Transverse colon (tissue), 4 donors: ENCODE measurements at regions of chr11 and their contacts with region 1.

Region 1: DNA sequence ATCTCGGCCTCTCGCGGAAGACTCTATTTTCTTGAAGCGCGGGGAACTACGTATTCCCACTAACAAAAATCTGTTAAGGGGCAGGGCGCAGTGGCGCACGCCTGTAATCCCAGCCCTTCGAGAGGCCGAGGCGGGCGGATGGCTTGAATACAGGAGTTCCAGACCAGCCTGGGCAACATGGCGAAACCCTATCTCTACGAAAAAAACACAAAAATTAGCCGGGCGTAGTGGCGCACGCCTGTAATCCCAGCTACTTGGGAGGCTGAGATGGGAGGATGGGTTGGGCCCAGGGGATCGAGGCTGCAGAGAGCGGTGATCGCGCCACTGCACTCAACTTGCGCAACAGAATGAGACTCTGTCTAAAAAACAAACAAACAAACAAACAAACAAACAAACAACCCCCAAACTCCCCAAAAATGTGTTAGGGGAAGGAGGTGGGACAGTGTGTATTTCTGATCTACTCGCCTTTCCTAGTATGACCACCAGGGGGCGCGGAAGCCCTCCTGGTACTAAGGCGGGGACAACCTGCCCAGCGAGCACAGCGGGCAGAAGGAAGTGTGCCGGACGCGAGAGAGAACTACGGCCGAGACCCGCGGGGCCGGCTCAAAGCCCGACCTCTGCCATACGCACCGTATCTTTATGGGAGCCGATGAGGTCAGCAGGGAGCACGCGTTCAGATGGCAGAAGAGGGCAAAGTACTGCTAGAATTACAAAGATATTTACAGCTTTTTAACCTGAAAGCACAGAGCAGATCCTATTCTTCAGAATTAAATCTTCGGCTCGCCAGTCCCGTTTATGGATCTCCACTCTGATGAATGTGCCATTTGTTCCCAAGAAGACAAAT is 1.3 kb upstream of the STX3 start:
- DNase-seq: peak; percentile 91
- H3K4me3 ChIP-seq: peak overlapping the region; percentile 80 to 96 (median 93)
- H3K27ac ChIP-seq: peak overlapping the region; percentile 94 to 98 (median 96)
- H3K4me1 ChIP-seq: peaks cover 3 to 22% (median 16%) of the 10 kb centered on the region in 4 donors
- H3K27me3 ChIP-seq: no peaks in the 10 kb centered on the region
- CTCF ChIP-seq: peak; percentile 91 to 97 (median 95)
- EP300 ChIP-seq: no peak
- POLR2A ChIP-seq: no peak

Region 2: DNA sequence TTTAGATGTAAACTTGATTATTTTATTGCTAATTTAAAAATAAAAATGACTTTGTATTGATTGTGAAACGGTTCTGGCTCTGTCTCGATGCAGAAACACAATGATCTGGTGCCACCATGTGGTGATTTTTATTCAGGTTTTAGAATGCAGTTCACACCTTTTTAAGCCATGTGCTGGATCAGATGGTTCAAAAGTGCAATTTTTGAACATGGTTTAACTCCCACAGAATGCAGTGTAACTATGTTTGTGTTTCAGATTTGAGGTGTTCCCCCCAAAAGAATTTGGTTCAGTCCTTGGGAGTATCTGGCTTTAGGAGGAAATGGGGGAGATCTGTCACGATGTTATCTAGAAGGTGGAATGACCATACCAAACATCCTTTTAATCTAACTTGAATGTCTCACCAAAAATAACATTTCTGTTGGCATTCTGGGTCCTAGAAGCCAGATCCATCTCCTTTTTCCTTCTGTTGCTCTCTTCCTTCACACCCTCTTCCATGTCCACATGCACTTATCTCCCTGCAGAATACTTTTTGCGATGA is 48.8 kb after region 1 on chr11:
- in situ Hi-C with region 1: loop called (anchors 5 to 10 kb)
- intact Hi-C with region 1: loop called (anchors 5 kb)
- DNase-seq: no peak
- H3K4me3 ChIP-seq: no peak overlapping the region
- H3K27ac ChIP-seq: no peak overlapping the region
- H3K4me1 ChIP-seq: peaks cover 4 to 35% (median 12%) of the 10 kb centered on the region in 4 donors
- H3K27me3 ChIP-seq: no peaks in the 10 kb centered on the region
- CTCF ChIP-seq: peak; percentile 55 to 81 (median 66)
- EP300 ChIP-seq: no peak
- POLR2A ChIP-seq: no peak

Region 3: DNA sequence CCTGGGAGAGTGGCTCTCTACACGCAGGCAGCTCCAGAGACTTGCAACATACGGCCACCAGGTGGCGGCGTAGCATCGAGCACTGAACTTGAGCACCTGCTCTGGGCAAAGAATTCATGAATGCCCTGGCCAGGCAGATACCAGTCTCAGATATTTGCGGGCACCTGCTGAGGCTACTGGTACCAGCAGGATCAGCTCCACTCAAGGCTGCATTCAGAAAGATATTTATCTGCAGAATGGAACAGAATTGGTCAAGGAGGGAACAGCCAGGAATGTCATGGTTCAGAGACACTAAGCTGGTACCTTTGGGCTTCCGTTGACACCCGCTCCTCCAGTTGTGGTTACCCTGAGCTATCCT is 1077.2 kb after region 1 on chr11:
- in situ Hi-C with region 1: no loop called
- intact Hi-C with region 1: loop called (anchors 5 kb)
- DNase-seq: peak; percentile 86
- H3K4me3 ChIP-seq: no peak overlapping the region
- H3K27ac ChIP-seq: no peak overlapping the region
- H3K4me1 ChIP-seq: peaks cover 0 to 11% (median 6%) of the 10 kb centered on the region in 4 donors
- H3K27me3 ChIP-seq: peaks cover 3% of the 10 kb centered on the region
- CTCF ChIP-seq: peak; percentile 89 to 97 (median 92)
- EP300 ChIP-seq: no peak
- POLR2A ChIP-seq: no peak